GM12878 (cell line): ENCODE measurements at regions of chr1 and their contacts with region 1.

Region 1: DNA sequence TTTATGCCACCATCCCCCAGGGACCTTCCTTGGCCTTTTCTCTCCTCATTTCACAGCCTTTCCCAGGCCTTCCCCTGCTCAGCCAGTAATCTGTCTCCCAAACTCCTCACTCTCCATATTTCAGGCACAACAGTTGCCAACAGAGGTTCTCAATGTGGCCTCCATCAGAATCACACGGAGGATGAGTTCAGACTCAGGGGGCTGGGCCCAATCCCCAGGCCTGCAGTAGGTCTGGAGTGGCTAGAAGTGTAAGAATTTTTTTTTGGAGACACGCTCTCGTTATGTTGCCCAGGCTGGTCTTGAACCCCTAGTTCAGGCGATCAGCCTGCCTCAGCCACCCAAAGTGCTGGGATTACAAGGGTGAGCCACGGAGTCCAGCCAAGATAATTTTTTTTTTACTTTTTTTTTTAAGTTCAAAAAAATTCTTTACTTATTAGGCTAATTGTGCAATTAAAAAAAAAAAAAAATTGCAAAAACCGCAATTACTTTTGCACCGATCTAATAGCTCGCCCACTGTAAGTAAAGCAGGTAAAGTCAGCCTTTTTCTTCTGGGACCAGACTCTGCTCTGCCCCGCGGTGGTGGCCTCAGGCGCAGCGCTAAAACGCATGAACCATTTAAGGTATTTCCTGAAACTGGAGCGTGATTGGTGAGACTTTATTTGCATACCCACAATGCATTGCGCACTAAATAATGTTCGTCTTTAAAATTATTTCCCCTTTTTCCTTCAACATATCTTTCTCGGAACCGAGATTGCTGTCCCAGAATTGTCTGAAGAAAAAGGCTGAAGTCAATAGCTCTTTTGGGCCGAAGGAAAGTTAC is 18.7 kb downstream of the KIAA2013 start:
- DNase-seq: peak; percentile 85
- ATAC-seq: peak; percentile 70
- H3K4me3 ChIP-seq: no peak overlapping the region
- H3K27ac ChIP-seq: peak overlapping the region; percentile 100
- H3K4me1 ChIP-seq: no peaks in the 10 kb centered on the region
- H3K27me3 ChIP-seq: no peaks in the 10 kb centered on the region
- CTCF ChIP-seq: peak; percentile 59 to 71 (median 66); a peak in 5 of 6 replicates
- EP300 ChIP-seq: no peak
- POLR2A ChIP-seq: no peak
- RAD21 ChIP-seq: peak; percentile 48; the same call in 1 of the 2 replicates

Region 2: GRCh38 chr1:11838349-11839272 is 68.9 kb before region 1 on chr1:
- CTCF ChIA-PET with region 1: interaction called, 4 read pairs
- POLR2A ChIA-PET with region 1: no interaction called
- RAD21 ChIA-PET with region 1: interaction called, 5 read pairs
- SMC1A ChIA-PET with region 1: no interaction called
- in situ Hi-C with region 1: no loop called
- intact Hi-C with region 1: loop called (anchors 1 kb)
- DNase-seq: peak; percentile 2
- ATAC-seq: peak; percentile 97
- H3K4me3 ChIP-seq: no peak overlapping the region
- H3K27ac ChIP-seq: no peak overlapping the region
- H3K4me1 ChIP-seq: peaks cover 17% of the 10 kb centered on the region
- H3K27me3 ChIP-seq: no peaks in the 10 kb centered on the region
- CTCF ChIP-seq: peak; percentile 97 to 99 (median 99)
- EP300 ChIP-seq: no peak
- POLR2A ChIP-seq: peak; percentile 22; the same call in 1 of the 2 replicates
- RAD21 ChIP-seq: peak; percentile 94

Region 3: GRCh38 chr1:11874258-11874562 is 33.3 kb before region 1 on chr1:
- CTCF ChIA-PET with region 1: no interaction called
- POLR2A ChIA-PET with region 1: no interaction called
- RAD21 ChIA-PET with region 1: no interaction called
- SMC1A ChIA-PET with region 1: no interaction called
- in situ Hi-C with region 1: no loop called
- intact Hi-C with region 1: no loop called
- DNase-seq: no peak
- ATAC-seq: no peak
- H3K4me3 ChIP-seq: no peak overlapping the region
- H3K27ac ChIP-seq: no peak overlapping the region
- H3K4me1 ChIP-seq: no peaks in the 10 kb centered on the region
- H3K27me3 ChIP-seq: peaks cover 0 to 1% of the 10 kb centered on the region in 2 experiments; a peak in 1 of 4 replicates
- CTCF ChIP-seq: no peak
- EP300 ChIP-seq: no peak
- POLR2A ChIP-seq: no peak
- RAD21 ChIP-seq: no peak

Region 4: GRCh38 chr1:11967028-11967547 is 59.6 kb after region 1 on chr1:
- CTCF ChIA-PET with region 1: interaction called, 7 read pairs
- POLR2A ChIA-PET with region 1: interaction called, 6 read pairs
- RAD21 ChIA-PET with region 1: interaction called, 25 read pairs
- SMC1A ChIA-PET with region 1: interaction called, 7 read pairs
- in situ Hi-C with region 1: no loop called
- intact Hi-C with region 1: loop called (anchors 1 kb)
- DNase-seq: peak; percentile 41
- ATAC-seq: peak; percentile 92
- H3K4me3 ChIP-seq: no peak overlapping the region
- H3K27ac ChIP-seq: no peak overlapping the region
- H3K4me1 ChIP-seq: no peaks in the 10 kb centered on the region
- H3K27me3 ChIP-seq: no peaks in the 10 kb centered on the region
- CTCF ChIP-seq: peak; percentile 63 to 81 (median 70); a peak in 5 of 6 replicates
- EP300 ChIP-seq: no peak
- POLR2A ChIP-seq: no peak
- RAD21 ChIP-seq: peak; percentile 77

Region 5: DNA sequence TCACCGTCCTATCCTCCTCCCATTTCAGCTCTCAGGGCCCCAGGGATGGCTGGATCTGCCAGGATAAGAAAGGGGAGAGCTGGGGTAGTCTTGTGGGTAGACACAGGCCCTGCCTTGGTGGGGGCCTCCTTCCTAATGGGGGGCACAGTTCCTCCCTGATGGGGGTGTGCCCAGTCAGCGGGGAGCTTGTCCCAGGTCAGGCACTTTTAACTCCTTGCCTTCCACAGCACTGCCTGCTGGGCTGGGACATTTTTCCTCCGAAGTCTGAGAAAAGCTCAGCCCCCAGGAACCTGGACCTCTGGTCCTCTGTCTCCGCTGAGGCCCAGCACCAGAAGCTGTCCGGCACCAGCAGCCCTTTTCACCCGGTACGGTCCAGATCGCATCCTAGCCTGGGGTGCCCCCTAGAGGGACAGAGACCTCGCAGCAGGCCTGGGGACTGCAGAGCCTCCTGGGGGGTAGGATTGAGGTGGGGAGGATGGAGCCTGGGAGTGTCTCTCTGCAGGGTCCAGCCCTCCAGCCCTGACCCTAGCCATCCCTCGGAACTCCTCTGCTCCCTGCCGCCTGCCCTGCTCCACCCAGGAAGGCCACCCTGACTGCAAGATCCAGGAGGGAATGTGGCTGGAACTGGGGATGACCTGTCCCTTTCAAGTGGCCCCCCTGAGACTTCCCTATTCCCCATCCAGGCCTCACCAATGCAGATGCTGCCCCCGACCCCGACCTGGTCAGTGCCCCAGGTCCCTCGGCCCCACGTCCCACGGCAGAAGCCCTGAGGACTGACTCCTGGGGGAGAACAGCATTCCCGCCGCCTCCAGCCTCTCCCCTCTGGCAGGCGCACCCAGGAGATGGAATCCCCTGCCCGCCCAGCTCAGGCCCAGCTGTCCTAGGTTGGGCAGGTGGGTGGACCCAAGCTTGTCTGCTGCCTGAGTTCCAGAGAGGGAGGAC is 123.8 kb after region 1 on chr1:
- CTCF ChIA-PET with region 1: interaction called, 16 read pairs
- POLR2A ChIA-PET with region 1: interaction called, 5 read pairs
- RAD21 ChIA-PET with region 1: interaction called, 3 read pairs
- SMC1A ChIA-PET with region 1: no interaction called
- in situ Hi-C with region 1: no loop called
- intact Hi-C with region 1: no loop called
- DNase-seq: no peak
- ATAC-seq: peak; percentile 95
- H3K4me3 ChIP-seq: no peak overlapping the region
- H3K27ac ChIP-seq: no peak overlapping the region
- H3K4me1 ChIP-seq: no peaks in the 10 kb centered on the region
- H3K27me3 ChIP-seq: no peaks in the 10 kb centered on the region
- CTCF ChIP-seq: peak; percentile 68 to 80 (median 70)
- EP300 ChIP-seq: no peak
- POLR2A ChIP-seq: no peak
- RAD21 ChIP-seq: peak; percentile 82

Region 6: GRCh38 chr1:12067900-12068821 is 160.7 kb after region 1 on chr1:
- CTCF ChIA-PET with region 1: no interaction called
- POLR2A ChIA-PET with region 1: interaction called, 19 read pairs
- RAD21 ChIA-PET with region 1: interaction called, 3 read pairs
- SMC1A ChIA-PET with region 1: interaction called, 10 read pairs
- in situ Hi-C with region 1: no loop called
- intact Hi-C with region 1: loop called (anchors 5 kb)
- DNase-seq: peak; percentile 91
- ATAC-seq: peak; percentile 56
- H3K4me3 ChIP-seq: peak overlapping the region; percentile 86
- H3K27ac ChIP-seq: peak overlapping the region; percentile 91
- H3K4me1 ChIP-seq: peaks cover 39% of the 10 kb centered on the region
- H3K27me3 ChIP-seq: no peaks in the 10 kb centered on the region
- CTCF ChIP-seq: no peak
- EP300 ChIP-seq: peak; percentile 45 to 83; a peak in 3 of 4 replicates
- POLR2A ChIP-seq: peak; percentile 67
- RAD21 ChIP-seq: no peak